ENCODE measurements at regions of chr2 and their contacts with region 1.

Region 1: GRCh38 chr2:38581193-38582147 is 21.3 kb downstream of the HNRNPLL start:
- DNase-seq: peak; percentile 62 to 82 (median 81)
- H3K4me3 ChIP-seq: no peak overlapping the region
- H3K4me3 Mint-ChIP-seq: peak overlapping the region in 1 of 8 donors; percentile 22
- H3K27ac ChIP-seq: no peak overlapping the region
- H3K27ac Mint-ChIP-seq: peak overlapping the region in 5 of 7 donors; percentile 41 to 65 (median 62)
- H3K4me1 ChIP-seq: peaks cover 51% of the 10 kb centered on the region
- H3K4me1 Mint-ChIP-seq: peaks cover 26 to 64% (median 41%) of the 10 kb centered on the region in 4 donors
- H3K27me3 ChIP-seq: no peaks in the 10 kb centered on the region
- H3K27me3 Mint-ChIP-seq: no peaks in the 10 kb centered on the region

Region 2: DNA sequence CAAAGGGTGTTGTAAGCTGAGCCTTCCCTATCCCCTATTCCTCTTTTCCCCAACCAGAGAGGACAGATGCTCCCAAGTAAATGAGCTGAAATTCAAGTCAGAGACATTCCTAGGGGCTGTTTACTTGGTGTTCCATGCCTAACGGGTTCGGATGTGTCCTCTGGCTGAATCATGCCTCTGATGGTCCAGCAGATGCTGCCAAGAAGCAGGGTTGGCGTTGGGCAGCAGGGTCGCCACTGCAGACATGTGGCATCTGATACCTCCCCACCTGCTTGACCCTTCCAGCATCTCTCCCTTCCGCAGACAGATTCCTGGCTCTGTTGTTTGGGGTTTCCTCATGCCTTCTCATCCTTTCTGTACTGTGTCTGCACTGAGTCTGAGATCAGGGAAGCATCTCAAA is 87.1 kb before region 1 on chr2:
- CTCF ChIA-PET with region 1: no interaction called
- POLR2A ChIA-PET with region 1: no interaction called
- intact Hi-C with region 1: no loop called
- DNase-seq: no peak
- H3K4me3 ChIP-seq: no peak overlapping the region
- H3K4me3 Mint-ChIP-seq: no peak overlapping the region
- H3K27ac ChIP-seq: no peak overlapping the region
- H3K27ac Mint-ChIP-seq: no peak overlapping the region
- H3K4me1 ChIP-seq: peaks cover 5% of the 10 kb centered on the region
- H3K4me1 Mint-ChIP-seq: peaks cover 0 to 1% (median 0%) of the 10 kb centered on the region in 4 donors
- H3K27me3 ChIP-seq: no peaks in the 10 kb centered on the region
- H3K27me3 Mint-ChIP-seq: peaks cover 0 to 2% of the 10 kb centered on the region in 2 donors

Region 3: DNA sequence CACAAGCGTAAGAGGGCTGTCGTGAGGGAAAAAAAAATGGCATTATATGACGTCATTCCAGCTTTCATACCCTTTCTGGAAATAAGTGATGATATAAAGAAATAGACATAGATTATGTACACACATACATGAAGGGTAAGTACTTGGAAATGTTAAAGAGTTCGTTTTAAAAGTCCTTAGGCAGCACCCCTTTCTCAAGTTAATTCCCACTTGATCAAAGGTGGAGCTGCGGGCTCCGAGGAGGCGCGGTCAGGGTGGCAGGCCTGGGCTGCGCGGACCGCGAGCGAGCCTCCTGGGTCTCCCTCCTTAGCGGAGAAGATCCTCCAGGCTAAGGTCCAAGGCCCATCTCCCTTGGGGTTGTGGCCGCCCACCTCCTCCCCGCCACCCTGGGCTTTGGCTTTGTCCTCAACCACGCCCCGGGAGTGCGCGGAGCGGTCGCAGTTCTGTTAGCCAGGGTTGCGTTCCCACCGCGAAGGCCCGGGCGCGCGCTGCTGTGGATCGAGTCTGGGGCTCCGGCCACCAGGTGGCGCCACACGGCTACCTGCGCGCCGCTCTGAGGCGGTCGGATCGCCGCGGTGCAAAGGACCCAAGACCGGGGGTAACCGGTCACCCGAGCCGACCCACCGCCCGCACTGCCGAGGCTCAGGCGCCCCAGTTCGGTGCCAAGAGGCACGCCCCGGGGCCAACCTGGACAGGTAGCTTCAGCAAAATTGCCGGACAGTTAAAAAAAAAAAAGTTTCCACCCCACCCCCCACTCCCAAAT is 45.5 kb before region 1 on chr2:
- CTCF ChIA-PET with region 1: interaction called, 18 read pairs
- POLR2A ChIA-PET with region 1: interaction called, 4 read pairs
- intact Hi-C with region 1: no loop called
- DNase-seq: peak; percentile 60 to 77 (median 70)
- H3K4me3 ChIP-seq: peak overlapping the region; percentile 47 to 52
- H3K4me3 Mint-ChIP-seq: peak overlapping the region; percentile 25 to 77 (median 52)
- H3K27ac ChIP-seq: no peak overlapping the region
- H3K27ac Mint-ChIP-seq: peak overlapping the region in 1 of 7 donors; percentile 36
- H3K4me1 ChIP-seq: peaks cover 9% of the 10 kb centered on the region
- H3K4me1 Mint-ChIP-seq: peaks cover 0 to 6% (median 2%) of the 10 kb centered on the region in 4 donors
- H3K27me3 ChIP-seq: no peaks in the 10 kb centered on the region
- H3K27me3 Mint-ChIP-seq: peaks cover 0 to 2% of the 10 kb centered on the region in 2 donors

Region 4: DNA sequence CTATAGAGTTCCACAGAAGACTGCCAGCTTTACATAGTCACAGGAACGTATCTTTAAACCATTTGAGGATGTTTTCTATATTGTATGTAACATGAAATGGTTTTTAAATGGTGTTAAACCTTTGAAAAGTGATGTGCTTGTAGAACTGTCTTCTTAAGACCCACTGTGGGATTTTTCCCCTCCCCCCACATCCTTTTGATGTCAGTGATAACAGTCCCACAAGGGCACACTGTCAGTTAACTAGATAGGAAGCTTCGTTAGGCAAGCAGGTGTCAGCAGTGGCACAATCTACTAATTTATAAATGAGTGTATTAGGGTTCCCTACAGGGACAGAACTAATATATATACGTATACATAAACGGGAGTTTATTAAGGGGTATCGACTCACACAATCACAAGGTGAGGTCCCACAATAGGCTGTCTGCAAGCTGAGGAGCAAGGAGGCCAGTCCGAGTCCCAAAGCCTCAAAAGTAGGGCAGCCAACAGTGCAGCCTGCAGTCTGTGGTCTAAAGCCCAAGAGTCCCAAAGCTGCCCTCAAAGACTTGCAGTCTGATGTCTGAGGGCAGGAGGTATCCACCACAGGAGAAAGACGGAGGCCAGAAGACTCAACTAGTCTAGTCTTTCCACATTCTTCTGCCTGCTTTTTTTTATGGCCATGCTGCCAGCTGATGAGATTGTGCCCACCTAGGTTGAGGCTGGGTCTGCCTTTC is 45.0 kb after region 1 on chr2:
- CTCF ChIA-PET with region 1: interaction called, 21 read pairs
- POLR2A ChIA-PET with region 1: interaction called, 14 read pairs
- intact Hi-C with region 1: no loop called
- DNase-seq: peak; percentile 56 to 71 (median 64)
- H3K4me3 ChIP-seq: no peak overlapping the region
- H3K4me3 Mint-ChIP-seq: peak overlapping the region in 7 of 8 donors; percentile 22 to 70 (median 57)
- H3K27ac ChIP-seq: peak overlapping the region; percentile 7
- H3K27ac Mint-ChIP-seq: peak overlapping the region; percentile 43 to 89 (median 82)
- H3K4me1 ChIP-seq: peaks cover 21% of the 10 kb centered on the region
- H3K4me1 Mint-ChIP-seq: peaks cover 20 to 29% (median 26%) of the 10 kb centered on the region in 4 donors
- H3K27me3 ChIP-seq: no peaks in the 10 kb centered on the region
- H3K27me3 Mint-ChIP-seq: no peaks in the 10 kb centered on the region

Region 5: DNA sequence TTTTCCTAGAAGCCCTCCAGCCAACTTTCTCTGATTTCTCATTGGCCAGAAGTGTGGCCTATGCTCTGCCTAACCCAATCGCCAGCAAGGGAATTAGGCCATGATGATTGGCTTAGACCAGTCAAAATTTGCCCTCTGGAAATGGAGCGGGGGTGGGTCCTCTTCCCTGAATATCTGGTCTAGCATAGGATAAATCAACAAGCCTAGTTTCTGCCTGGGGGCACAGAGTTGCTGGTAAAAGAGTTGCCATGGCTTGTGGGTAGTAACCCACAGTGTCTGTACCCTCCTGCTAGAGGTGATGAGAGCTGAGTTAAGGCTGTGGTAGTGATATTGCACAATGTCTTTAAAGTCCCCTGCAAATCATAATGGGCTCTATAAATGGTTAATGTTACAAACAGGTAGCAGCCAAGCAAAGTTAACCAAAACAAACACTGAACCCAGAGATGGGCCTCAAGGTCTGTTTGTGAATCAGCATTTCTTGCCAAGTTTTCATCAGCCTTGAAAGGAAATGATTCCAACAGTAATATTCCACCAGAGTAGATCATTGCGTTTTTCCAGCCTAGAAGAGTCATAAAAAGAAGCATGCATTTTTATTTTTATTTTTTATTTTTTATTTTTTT is 103.8 kb after region 1 on chr2:
- CTCF ChIA-PET with region 1: interaction called, 87 read pairs
- POLR2A ChIA-PET with region 1: interaction called, 32 read pairs
- intact Hi-C with region 1: loop called (anchors 1 kb)
- DNase-seq: no peak
- H3K4me3 ChIP-seq: no peak overlapping the region
- H3K4me3 Mint-ChIP-seq: peak overlapping the region in 3 of 8 donors; percentile 24 to 62 (median 53)
- H3K27ac ChIP-seq: no peak overlapping the region
- H3K27ac Mint-ChIP-seq: peak overlapping the region in 6 of 7 donors; percentile 10 to 98 (median 83)
- H3K4me1 ChIP-seq: peaks cover 61% of the 10 kb centered on the region
- H3K4me1 Mint-ChIP-seq: peaks cover 38 to 76% (median 54%) of the 10 kb centered on the region in 4 donors
- H3K27me3 ChIP-seq: no peaks in the 10 kb centered on the region
- H3K27me3 Mint-ChIP-seq: no peaks in the 10 kb centered on the region

Region 6: DNA sequence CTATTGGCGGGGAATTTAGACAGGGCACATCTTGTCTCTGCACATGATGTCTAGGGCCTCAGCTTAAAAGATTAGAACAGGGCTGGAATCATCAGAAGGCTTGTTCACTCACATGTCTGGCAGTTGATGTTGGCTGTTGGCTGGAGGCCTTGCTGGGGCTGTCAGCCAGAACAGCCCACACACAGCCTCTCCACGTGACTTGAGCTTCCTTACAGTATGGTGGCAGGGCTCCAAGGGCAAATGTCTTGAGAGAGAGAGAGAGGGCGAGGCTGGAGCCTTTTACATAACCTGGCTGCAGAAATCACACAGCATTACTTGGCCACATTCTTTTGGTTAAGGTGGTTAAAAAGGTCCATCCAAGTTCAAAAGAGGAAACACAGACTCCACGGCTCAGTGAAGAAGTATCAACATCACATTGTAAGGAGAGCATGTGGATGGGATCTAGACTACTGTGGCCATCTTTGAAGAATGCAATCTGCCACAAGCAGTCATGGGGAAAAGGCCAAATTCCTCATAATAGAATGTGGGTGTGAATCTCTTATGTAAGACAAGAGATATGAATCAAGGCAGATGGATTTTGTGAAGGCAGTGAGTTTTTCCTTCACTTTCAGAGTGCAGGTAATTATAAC is 139.3 kb after region 1 on chr2:
- CTCF ChIA-PET with region 1: interaction called, 217 read pairs
- POLR2A ChIA-PET with region 1: interaction called, 39 read pairs
- intact Hi-C with region 1: no loop called
- DNase-seq: no peak
- H3K4me3 ChIP-seq: no peak overlapping the region
- H3K4me3 Mint-ChIP-seq: peak overlapping the region in 5 of 8 donors; percentile 22 to 44 (median 29)
- H3K27ac ChIP-seq: no peak overlapping the region
- H3K27ac Mint-ChIP-seq: peak overlapping the region; percentile 75 to 94 (median 89)
- H3K4me1 ChIP-seq: peaks cover 58% of the 10 kb centered on the region
- H3K4me1 Mint-ChIP-seq: peaks cover 39 to 68% (median 54%) of the 10 kb centered on the region in 4 donors
- H3K27me3 ChIP-seq: no peaks in the 10 kb centered on the region
- H3K27me3 Mint-ChIP-seq: no peaks in the 10 kb centered on the region

Measured in CD4-positive, alpha-beta memory T cell (primary cell).